ENCODE measurements at regions of chr19 and their contacts with region 1.

Region 1: DNA sequence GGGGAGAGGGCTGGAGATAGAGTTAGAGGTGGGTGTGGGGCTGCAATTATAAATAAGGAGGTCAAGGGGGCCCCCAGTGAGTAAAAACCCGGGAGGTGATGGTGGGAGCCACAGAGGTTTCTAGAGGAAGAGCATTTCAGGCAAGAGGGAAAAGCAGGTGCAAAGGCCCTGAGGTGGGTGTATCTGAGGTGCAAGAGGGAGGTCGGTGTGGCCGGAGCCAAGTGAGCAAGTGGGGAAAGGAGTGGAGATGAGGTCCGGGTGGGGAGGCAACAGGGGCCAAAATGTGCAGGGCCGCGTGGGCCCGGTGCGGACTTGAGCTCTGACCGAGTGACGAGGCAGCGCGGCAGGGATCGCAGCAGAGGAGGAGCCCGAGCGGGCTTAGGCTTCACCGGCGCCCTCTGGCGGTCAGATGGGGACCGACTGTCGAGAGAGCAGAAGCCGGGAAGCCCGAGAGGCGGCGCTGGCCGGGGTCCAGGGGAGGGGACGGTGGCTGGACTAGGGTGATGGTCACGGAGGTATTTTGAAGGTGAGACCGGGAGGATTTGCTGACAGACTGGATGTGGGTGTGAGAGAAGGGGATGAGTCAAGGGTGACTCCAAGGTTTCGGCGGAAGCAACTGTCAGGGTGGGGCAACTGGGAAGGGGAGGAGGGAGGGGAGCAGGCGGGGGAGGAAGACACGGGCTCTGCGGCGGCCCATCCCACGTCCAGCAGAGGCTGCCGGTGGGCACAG is 17.7 kb upstream of the SPACA4 start:
- DNase-seq: peak; percentile 96
- ATAC-seq: peak; percentile 80
- H3K4me3 Mint-ChIP-seq: peak overlapping the region; percentile 72
- H3K27ac Mint-ChIP-seq: no peak overlapping the region
- H3K4me1 Mint-ChIP-seq: peaks cover 12% of the 10 kb centered on the region
- H3K27me3 Mint-ChIP-seq: peaks cover 30% of the 10 kb centered on the region
- CTCF ChIP-seq: peak; percentile 92

Region 2: DNA sequence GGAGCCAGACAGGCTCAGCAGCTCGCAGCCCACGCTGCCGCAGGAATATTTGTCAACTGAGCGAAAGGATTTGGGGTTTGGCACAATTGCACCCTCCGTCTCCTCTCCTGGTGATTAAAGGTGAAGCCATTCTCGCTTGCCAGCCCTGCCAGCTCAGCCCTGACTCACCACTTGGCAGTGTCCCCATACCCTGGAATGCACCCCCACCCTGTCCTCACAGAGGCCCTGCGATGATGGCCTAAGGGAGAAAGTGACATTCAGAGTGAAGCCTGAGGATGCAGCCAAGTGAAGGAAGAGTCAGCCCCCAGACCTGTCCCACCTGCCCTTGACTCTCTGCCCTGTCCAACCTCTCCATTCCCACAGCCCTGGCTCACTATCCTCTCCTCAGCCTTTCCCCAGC is 100.8 kb before region 1 on chr19:
- CTCF ChIA-PET with region 1: interaction called, 122 read pairs
- POLR2A ChIA-PET with region 1: interaction called, 11 read pairs
- DNase-seq: no peak
- ATAC-seq: no peak
- H3K4me3 Mint-ChIP-seq: no peak overlapping the region
- H3K27ac Mint-ChIP-seq: no peak overlapping the region
- H3K4me1 Mint-ChIP-seq: peaks cover 28% of the 10 kb centered on the region
- H3K27me3 Mint-ChIP-seq: peaks cover 27% of the 10 kb centered on the region
- CTCF ChIP-seq: no peak

Region 3: DNA sequence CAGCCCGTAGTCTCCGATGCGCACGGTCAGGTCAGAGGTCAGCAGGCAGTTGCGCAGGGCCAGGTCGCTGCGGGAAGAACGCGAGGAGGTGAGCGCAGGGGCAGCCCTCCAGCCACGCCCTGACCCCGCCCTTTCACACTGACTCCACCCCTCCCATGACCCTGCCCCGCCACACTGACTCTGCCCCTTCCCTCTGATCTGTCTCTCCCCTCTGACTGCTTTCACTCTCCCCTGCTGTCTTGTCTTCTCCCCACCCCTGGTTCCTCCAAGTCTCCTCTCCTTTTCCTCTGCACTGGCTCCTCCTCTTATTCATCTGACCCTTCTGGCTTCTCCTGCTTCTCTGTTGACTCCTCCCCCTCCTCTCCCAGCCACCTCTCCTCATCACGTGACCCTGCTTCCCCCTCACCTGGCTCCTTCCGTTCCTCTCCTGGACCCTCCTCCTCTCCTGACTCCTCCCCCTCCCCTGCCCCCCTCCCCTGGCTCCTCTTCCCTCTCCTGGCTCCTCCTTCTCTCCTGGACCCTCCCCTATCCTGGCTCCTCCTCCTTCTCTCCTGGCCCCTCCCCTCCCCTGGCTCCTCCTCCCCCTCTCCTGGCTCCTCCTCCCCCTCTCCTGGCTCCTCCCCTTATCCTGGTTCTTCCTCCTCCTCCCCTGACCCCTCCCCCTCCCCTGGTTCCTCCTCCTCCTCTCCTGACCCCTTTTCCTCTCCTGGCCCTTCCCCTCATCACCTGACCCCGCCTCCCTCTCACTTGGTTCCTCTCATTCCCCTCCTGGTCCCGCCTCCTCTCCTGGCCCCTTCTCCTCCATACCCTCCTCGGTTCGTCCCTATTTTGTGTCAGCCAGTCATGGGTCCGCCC is 87.1 kb before region 1 on chr19:
- CTCF ChIA-PET with region 1: interaction called, 297 read pairs
- POLR2A ChIA-PET with region 1: interaction called, 9 read pairs
- DNase-seq: peak; percentile 100
- ATAC-seq: peak; percentile 87
- H3K4me3 Mint-ChIP-seq: peak overlapping the region; percentile 67
- H3K27ac Mint-ChIP-seq: peak overlapping the region; percentile 98
- H3K4me1 Mint-ChIP-seq: peaks cover 15% of the 10 kb centered on the region
- H3K27me3 Mint-ChIP-seq: peaks cover 6% of the 10 kb centered on the region
- CTCF ChIP-seq: no peak

Region 4: DNA sequence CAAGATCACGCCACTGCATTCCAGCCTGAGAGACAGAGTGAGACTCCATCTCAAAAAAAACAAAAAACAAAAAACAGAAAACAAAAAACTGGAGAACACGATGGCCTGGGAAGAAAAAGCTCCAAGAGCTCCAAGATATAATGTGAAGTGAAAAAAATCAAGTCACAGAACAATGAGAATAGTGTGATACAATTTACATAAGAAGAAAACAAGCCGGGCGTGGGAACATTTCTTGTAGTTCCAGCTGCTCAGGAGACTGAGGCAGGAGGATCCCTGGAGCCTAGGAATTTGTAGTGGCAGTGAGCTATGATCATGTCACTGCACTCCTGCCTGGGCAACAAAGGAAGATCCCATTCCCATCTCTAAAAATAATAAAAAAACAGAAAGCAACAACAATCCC is 68.7 kb before region 1 on chr19:
- CTCF ChIA-PET with region 1: interaction called, 10 read pairs
- POLR2A ChIA-PET with region 1: no interaction called
- DNase-seq: no peak
- ATAC-seq: no peak
- H3K4me3 Mint-ChIP-seq: no peak overlapping the region
- H3K27ac Mint-ChIP-seq: no peak overlapping the region
- H3K4me1 Mint-ChIP-seq: peaks cover 4% of the 10 kb centered on the region
- H3K27me3 Mint-ChIP-seq: peaks cover 6% of the 10 kb centered on the region; the same call in 1 of the 2 replicates
- CTCF ChIP-seq: no peak

Region 5: DNA sequence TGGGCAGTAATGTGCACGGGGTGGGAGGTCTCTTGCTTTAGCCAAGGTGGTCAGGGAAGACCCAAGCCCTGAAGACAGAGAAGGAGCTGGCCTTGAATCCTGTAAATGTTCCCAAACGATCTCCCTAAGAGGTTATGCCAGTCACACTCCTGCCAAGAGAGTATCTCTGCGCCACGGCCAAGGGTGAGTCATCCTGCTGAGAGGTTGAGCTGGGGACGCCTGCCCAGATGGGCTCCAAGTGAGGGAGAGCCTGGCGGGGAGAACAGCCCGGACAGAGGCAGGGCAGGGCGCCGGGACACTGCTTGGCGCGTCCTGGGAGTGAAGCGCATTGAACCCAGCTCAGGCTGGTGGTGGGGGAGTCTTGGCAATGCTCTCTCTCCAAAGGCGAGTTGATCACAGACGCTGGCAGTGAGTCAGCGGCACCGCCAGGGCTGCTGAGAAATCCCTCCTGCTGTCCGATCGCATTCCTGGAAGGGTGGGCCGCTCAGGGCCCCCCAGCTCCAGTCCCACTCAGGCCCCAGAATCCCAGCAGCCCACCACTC is 20.4 kb before region 1 on chr19:
- CTCF ChIA-PET with region 1: interaction called, 25 read pairs
- POLR2A ChIA-PET with region 1: no interaction called
- DNase-seq: no peak
- ATAC-seq: peak; percentile 51
- H3K4me3 Mint-ChIP-seq: no peak overlapping the region; the same call in 1 of the 2 replicates
- H3K27ac Mint-ChIP-seq: no peak overlapping the region
- H3K4me1 Mint-ChIP-seq: peaks cover 15% of the 10 kb centered on the region
- H3K27me3 Mint-ChIP-seq: peaks cover 6% of the 10 kb centered on the region; the same call in 1 of the 2 replicates
- CTCF ChIP-seq: no peak

Region 6: DNA sequence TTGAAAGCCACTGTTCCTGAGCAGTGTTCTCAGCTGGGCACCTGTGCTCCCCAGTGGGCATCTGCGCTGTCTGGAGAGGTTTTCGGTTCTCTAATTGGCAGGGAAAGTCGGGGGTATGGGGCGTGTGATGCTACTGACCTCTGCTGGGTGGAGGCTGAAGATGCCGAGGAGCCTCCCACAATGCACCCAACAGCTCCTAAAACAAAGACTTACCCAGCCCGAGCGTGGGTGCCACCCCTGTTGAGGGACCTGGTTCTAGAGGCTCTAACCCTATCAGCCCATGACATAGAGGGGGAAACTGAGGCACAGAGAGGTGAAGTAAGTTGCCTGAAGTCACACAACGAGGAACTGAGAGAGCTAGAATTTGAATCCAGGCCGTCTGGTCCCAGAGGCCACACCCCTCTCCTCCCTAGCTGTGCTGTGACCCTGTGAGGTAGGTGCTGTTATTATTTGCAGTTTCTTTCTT is 20.0 kb after region 1 on chr19:
- CTCF ChIA-PET with region 1: interaction called, 68 read pairs
- POLR2A ChIA-PET with region 1: no interaction called
- DNase-seq: peak; percentile 63
- ATAC-seq: peak; percentile 84
- H3K4me3 Mint-ChIP-seq: peak overlapping the region; percentile 37; the same call in 1 of the 2 replicates
- H3K27ac Mint-ChIP-seq: no peak overlapping the region
- H3K4me1 Mint-ChIP-seq: peaks cover 4% of the 10 kb centered on the region
- H3K27me3 Mint-ChIP-seq: no peaks in the 10 kb centered on the region
- CTCF ChIP-seq: no peak

Measured in WTC11 (cell line).